Spleen (tissue), 13 donors: ENCODE measurements at regions of chr5 and their contacts with region 1.

Region 1: DNA sequence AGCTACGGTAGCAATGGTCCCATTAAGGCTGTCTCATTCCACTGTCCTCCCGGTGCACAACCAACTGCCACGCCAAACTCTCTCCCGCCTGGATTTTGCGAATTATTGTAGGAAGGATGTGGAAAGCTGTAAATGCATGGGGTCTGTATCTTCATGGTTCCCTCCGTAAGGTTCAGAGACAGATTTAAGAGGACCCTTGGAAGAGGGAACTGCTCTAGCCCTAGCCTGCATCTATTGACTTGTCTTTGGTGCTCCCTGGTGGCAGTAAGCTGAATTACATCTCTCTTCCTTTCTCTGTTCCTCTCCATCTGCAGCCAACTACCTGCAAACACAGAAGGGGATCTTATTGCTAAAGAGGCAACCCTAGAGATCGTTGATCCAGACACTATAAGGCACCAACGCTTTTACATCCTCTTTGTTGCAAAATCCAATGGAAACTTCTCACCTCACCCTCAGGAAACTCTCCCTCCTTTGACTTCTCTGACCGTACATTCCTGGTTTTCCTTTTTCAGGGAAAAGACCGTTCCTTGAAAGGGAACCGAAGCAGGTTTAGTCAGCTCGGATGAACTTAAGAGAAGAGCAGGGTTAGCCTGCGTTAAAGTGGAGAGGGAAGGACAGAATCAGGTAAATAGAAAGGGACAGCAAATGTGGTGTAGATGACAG is 11.9 kb downstream of the CAPSL start:
- DNase-seq: no peak
- H3K4me3 ChIP-seq: peak overlapping the region in 2 of 8 donors; percentile 7 to 32
- H3K27ac ChIP-seq: no peak overlapping the region
- H3K4me1 ChIP-seq: peaks cover 5 to 22% (median 14%) of the 10 kb centered on the region in 6 donors
- H3K27me3 ChIP-seq: peaks cover 0 to 45% (median 0%) of the 10 kb centered on the region in 7 donors
- CTCF ChIP-seq: peak; percentile 79 to 91 (median 86)
- POLR2A ChIP-seq: no peak

Region 2: DNA sequence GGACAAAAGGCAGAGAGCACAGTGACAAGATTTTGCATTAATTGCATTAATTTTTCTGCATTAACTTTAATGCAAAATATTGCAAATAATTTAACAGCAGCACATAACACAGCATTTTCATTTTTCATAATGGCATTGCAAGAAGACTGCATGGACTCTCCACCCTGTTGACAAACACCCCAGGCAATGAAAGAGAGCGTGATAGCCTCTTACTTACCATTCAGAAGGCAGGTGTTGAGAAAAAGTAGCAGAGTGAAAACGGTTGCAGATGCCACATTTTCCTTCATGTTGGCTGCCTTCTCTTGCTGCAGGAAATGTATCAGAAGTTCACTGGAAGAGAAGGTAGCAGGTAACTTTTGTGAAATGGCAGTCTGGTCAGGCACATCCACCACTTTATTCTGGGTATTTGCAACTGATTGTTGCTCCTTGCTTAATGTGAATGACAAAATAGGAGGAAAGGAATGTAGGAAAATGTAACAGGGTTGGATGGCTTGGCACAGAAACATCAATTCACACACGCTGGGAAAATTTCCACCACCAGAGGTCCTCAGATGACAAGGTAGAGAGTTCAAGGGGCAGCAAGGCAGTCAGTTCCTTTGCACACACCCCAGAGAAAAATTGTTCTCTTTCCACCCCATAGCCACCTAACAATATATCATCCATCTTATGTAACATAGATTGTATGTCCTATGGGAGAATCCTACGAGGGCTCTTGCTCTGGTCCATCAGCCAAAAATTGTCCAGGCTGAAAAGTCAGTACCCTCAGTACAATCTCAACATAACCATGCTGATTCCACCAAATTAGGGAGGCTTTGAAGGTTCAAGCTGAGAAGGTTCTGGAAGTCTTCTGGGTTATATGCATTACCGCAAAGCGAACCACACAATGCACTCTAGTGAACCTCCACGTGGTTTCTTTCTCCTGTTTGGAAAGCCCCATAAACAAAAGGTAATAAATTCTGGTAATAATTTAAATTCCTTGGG is 836.9 kb before region 1 on chr5:
- intact Hi-C with region 1: loop called (anchors 5 kb)
- DNase-seq: no peak
- H3K4me3 ChIP-seq: no peak overlapping the region
- H3K27ac ChIP-seq: no peak overlapping the region
- H3K4me1 ChIP-seq: peaks cover 0 to 3% (median 0%) of the 10 kb centered on the region in 6 donors
- H3K27me3 ChIP-seq: no peaks in the 10 kb centered on the region
- CTCF ChIP-seq: peak in 10 of 11 experiments; percentile 32 to 69 (median 63)
- POLR2A ChIP-seq: no peak

Region 3: GRCh38 chr5:35617435-35618303 is 308.9 kb before region 1 on chr5 and contains the start of gene SPEF2:
- intact Hi-C with region 1: loop called (anchors 5 kb)
- DNase-seq: peak; percentile 92
- H3K4me3 ChIP-seq: peak within 1 kb of the TSS; percentile 55 to 88 (median 73)
- H3K27ac ChIP-seq: peak within 1 kb of the TSS; percentile 51 to 71 (median 63)
- H3K4me1 ChIP-seq: peaks cover 0 to 22% (median 9%) of the 10 kb centered on the region in 6 donors
- H3K27me3 ChIP-seq: peaks cover 0 to 5% (median 0%) of the 10 kb centered on the region in 7 donors
- CTCF ChIP-seq: peak; percentile 64 to 87 (median 80)
- POLR2A ChIP-seq: no peak
- total RNA-seq, gene SPEF2: 4.7 to 22.6 (median 10.2) TPM

Region 4: GRCh38 chr5:35777358-35778087 is 149.0 kb before region 1 on chr5:
- intact Hi-C with region 1: loop called (anchors 5 kb)
- DNase-seq: no peak
- H3K4me3 ChIP-seq: no peak overlapping the region
- H3K27ac ChIP-seq: peak overlapping the region in 2 of 8 donors; percentile 13 to 56
- H3K4me1 ChIP-seq: peaks cover 0 to 31% (median 15%) of the 10 kb centered on the region in 6 donors
- H3K27me3 ChIP-seq: no peaks in the 10 kb centered on the region
- CTCF ChIP-seq: peak in 10 of 11 experiments; percentile 27 to 67 (median 54)
- POLR2A ChIP-seq: no peak